Pancreas (tissue), 10 donors: ENCODE measurements at regions of chr6 and their contacts with region 1.

Region 1: GRCh38 chr6:135145063-135145800 is 35.9 kb upstream of the MYB start:
- DNase-seq: no peak
- ATAC-seq: peak; percentile 60 to 88 (median 82)
- H3K4me3 ChIP-seq: no peak overlapping the region
- H3K27ac ChIP-seq: no peak overlapping the region
- H3K4me1 ChIP-seq: peaks cover 0 to 2% (median 0%) of the 10 kb centered on the region in 3 donors
- H3K27me3 ChIP-seq: no peaks in the 10 kb centered on the region
- CTCF ChIP-seq: peak in 3 of 4 donors; percentile 22 to 42 (median 29)

Region 2: GRCh38 chr6:135423649-135424128 is 278.5 kb after region 1 on chr6:
- intact Hi-C with region 1: loop called in 1 of 3 experiments (anchors 10 kb)
- DNase-seq: no peak
- ATAC-seq: peak; percentile 67 to 91 (median 86)
- H3K4me3 ChIP-seq: no peak overlapping the region
- H3K27ac ChIP-seq: no peak overlapping the region
- H3K4me1 ChIP-seq: no peaks in the 10 kb centered on the region
- H3K27me3 ChIP-seq: no peaks in the 10 kb centered on the region
- CTCF ChIP-seq: peak; percentile 25 to 58 (median 38)